ENCODE measurements at regions of chr6 and their contacts with region 1.

Region 1: DNA sequence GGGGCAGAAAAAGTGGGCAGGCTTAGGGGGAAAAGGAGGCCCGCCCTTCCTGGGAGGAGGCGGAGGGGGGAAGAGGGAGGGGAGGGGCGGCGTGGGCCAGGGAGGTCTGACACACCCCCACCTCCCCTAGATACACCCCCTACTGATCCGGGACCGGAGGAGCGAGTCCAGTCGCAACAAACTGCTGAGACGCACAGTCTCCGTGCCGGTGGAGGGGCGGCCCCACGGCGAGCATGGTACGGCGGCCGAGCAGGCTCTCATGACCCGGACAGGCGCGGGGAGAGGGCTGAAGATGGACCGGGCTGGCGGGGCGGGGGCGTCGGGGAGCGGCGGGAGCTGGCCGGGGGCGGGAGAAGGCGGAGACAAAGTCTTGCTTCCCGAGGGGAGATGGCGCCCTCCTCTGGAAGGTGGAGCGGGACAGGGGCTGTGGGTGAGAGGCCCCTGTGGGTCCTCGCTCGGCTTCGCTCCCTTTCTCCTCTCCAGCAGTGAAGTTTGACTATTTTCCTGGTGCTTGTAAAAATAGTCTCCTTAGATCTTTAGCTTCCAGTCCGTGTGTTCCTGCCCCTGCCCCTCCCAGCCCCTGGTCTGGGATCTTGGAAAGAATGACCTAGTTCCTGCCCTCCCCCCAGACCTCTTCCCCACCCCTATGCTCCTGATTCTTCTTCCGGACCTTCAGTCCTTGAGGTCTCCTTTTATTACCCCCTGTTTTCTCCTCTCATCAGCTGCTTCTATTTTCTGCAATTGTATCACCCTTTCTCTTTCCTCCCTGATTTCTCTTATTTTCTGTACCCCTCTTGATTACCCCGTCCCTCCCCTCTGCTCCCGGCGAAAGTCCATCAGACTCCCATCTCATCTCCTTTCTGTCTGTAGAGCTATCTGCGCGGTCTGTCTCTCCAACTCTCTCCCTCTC is 6.1 kb downstream of the SYNGAP1 start:
- DNase-seq: peak; percentile 90
- H3K4me3 Mint-ChIP-seq: peak overlapping the region; percentile 93
- H3K27ac Mint-ChIP-seq: peak overlapping the region; percentile 91
- H3K4me1 Mint-ChIP-seq: peaks cover 77% of the 10 kb centered on the region
- H3K27me3 Mint-ChIP-seq: peaks cover 17% of the 10 kb centered on the region

Region 2: DNA sequence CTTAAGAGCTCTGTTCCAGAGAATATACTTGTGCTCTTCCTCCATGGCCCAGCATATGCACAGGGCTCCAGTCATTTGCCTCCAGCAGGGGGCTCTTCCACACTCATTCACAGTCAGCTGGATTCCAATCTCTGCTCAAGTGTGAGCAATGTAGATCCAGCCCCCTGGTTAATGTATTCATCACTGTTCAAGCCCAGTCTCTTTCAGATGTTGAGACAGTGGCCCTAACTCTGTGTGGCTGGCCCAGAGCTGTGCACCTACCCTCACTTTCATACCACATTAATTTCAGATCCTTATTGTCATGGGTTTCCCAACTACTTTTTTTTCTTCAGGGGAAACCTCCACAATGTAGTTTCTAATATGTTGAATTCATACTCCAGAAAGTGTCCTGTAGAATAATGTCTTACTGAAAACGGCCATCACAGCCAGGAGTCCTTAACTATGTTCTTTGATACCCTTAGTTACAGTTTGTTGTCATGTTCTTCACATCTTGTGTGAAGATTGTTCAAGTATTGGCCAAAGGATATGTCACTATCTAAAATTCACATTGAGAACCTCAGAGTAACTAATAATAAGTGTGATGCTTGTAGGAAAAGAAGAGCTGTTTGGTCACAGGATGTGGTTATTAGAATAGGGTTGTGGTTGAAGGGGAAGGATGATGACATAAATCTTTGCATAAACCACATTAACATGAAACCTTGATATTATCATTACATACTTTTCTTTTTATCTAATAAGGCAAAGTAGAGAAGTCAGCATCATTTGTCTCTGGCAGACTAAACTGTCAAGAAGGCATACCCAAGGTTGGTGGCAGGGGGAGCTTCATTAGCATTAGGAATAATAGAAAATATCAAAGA is 803.1 kb before region 1 on chr6:
- CTCF ChIA-PET with region 1: no interaction called
- DNase-seq: peak; percentile 62
- H3K4me3 Mint-ChIP-seq: peak overlapping the region; percentile 18
- H3K27ac Mint-ChIP-seq: peak overlapping the region; percentile 94
- H3K4me1 Mint-ChIP-seq: peaks cover 51% of the 10 kb centered on the region
- H3K27me3 Mint-ChIP-seq: no peaks in the 10 kb centered on the region

Region 3: DNA sequence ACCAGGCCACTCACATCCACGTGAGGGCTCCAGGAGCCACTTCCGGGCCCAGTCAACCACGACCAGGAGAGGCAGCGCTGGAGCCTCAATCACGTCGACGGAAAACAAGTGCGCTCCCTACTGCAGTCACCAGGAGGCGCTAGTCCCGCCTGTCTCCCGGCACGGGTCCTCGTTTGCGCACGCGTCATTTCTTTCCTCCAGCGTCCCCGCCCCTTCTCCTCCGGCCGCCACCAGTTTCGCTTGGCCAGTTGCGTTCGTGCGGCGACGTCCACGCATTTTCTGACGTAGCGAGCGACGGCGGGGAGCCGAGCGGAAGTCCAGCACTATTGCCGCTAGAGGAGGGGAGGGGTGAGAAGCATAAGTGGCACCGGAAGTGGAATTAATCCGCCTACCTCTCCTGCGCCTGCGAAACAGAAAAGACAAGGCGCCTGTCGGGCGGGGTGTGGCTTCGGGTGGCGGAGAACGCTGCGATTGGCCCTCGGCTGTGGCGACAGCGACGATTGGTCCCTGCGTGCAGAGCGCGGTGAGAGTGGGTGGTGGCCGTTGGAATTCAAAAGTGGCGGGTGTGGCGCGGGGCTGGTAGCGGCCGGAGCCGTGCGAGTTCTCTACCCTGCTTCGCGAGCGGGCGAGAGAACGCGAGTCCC is 34.5 kb before region 1 on chr6 and contains the start of gene KIFC1:
- CTCF ChIA-PET with region 1: interaction called, 10 read pairs
- DNase-seq: peak; percentile 99
- H3K4me3 Mint-ChIP-seq: peak within 1 kb of the TSS; percentile 87
- H3K27ac Mint-ChIP-seq: peak within 1 kb of the TSS; percentile 97
- H3K4me1 Mint-ChIP-seq: peaks cover 50% of the 10 kb centered on the region
- H3K27me3 Mint-ChIP-seq: peaks cover 4% of the 10 kb centered on the region

Measured in activated naive CD4-positive, alpha-beta T cell treated with anti-CD3 and anti-CD28 coated beads, Interleukin-2, amount 10 ng/mL, durations not matched to agents 7 days and 5 days (primary cell).